ENCODE measurements at regions of chr2 and their contacts with region 1.

Region 1: GRCh38 chr2:60223859-60224258 is 329.6 kb downstream of the BCL11A start:
- DNase-seq: no peak
- H3K4me3 Mint-ChIP-seq: no peak overlapping the region
- H3K27ac Mint-ChIP-seq: no peak overlapping the region
- H3K4me1 Mint-ChIP-seq: no peaks in the 10 kb centered on the region
- H3K27me3 Mint-ChIP-seq: no peaks in the 10 kb centered on the region
- CTCF ChIP-seq: no peak

Region 2: GRCh38 chr2:60058781-60059180 is 165.1 kb before region 1 on chr2:
- CTCF ChIA-PET with region 1: interaction called, 15 read pairs
- intact Hi-C with region 1: no loop called
- DNase-seq: no peak
- H3K4me3 Mint-ChIP-seq: no peak overlapping the region
- H3K27ac Mint-ChIP-seq: no peak overlapping the region
- H3K4me1 Mint-ChIP-seq: no peaks in the 10 kb centered on the region
- H3K27me3 Mint-ChIP-seq: no peaks in the 10 kb centered on the region
- CTCF ChIP-seq: no peak

Region 3: GRCh38 chr2:60498816-60499429 is 275.1 kb after region 1 on chr2:
- CTCF ChIA-PET with region 1: no interaction called
- intact Hi-C with region 1: loop called (anchors 5 kb)
- DNase-seq: no peak
- H3K4me3 Mint-ChIP-seq: no peak overlapping the region
- H3K27ac Mint-ChIP-seq: no peak overlapping the region
- H3K4me1 Mint-ChIP-seq: no peaks in the 10 kb centered on the region
- H3K27me3 Mint-ChIP-seq: peaks cover 7% of the 10 kb centered on the region
- CTCF ChIP-seq: no peak

Measured in Calu3 (cell line).